Naive thymus-derived CD4-positive, alpha-beta T cell (primary cell): ENCODE measurements at regions of chr4 and their contacts with region 1.

Region 1: DNA sequence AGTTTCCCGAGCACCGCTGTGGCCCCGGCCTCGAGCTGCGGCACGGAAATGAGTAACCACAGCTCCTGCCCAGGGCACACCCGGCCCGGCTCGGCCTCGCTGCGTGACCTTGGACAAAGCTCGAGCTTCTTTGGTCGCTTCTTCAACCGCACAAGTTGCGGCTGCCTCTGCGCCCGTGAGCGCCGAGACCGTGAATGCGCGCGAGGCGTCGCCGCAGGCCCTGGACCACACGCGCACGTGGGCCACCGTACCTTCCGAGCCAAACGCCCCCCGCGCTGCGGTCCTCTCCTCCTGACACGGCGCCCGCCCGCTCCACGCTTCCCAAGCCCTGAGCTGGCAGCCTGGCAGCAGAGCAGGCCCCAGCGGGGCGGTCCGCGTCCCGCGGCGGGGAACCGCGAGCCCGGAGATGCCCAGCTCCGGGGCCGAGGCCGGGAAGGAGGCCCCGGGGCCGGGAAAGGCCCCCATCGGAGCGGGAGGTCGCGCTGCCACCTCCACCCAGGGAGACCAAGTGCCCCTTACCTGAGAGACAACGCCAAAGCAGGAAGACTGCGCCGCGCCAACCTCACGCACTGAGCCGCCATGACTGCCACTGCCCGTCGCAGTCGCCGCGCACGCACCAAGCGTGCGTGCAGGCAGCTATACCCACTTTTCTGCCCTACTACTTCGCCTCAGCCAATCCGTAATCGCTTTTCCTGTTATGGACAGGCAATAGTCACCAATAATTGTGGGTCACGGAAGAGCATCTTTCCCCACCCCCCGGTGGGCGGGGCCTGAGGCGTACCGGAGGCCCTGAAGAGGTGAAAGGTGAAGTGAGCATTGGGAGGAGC is at the start of gene GRPEL1:
- DNase-seq: peak; percentile 100
- ATAC-seq: peak; percentile 96
- H3K4me3 ChIP-seq: peak within 1 kb of the TSS; percentile 95
- H3K4me3 Mint-ChIP-seq: peak within 1 kb of the TSS; percentile 89 to 98 (median 95)
- H3K27ac ChIP-seq: peak within 1 kb of the TSS; percentile 88
- H3K27ac Mint-ChIP-seq: peak within 1 kb of the TSS; percentile 91 to 98 (median 96)
- H3K4me1 ChIP-seq: peaks cover 27% of the 10 kb centered on the region in 2 donors
- H3K4me1 Mint-ChIP-seq: peaks cover 35 to 70% (median 49%) of the 10 kb centered on the region in 7 donors
- H3K27me3 ChIP-seq: no peaks in the 10 kb centered on the region
- H3K27me3 Mint-ChIP-seq: peaks cover 0 to 13% (median 0%) of the 10 kb centered on the region in 5 donors
- total RNA-seq, gene GRPEL1: 34.5 to 53.3 (median 49.1) TPM

Region 2: DNA sequence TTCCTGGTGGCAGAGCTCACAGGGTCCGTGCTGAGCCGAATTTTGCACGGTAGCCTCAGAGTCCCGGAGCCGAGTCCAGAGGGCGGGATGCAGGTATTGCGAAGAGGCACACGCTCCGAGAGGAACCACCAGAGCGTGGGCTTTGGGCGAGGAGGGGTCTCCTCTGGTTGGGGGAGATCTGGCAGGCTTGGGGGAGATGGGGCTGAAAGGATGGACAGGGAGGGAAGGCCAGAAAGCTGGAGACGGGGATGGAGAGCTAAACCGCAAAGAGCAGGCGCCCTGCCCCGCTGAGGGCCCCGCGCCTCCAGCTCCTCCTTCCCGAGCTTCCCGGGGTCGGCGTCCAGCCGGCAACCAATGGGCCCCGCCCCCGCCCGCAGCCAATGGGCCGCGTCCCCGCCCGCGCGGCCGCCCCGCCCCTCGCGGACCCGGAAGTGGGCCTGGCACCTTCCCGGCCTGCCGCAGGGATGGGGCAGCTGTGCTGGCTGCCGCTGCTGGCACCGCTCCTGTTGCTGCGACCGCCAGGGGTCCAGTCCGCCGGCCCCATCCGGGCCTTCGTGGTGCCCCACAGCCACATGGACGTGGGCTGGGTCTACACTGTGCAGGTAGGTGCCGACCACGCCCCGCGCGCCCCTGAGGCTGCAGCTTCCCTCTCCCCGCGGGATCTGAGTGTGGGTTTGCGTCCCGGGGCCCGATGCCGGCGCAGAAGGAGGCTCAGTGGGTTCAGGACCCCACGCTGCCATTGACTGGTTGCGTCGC is 492.7 kb before region 1 on chr4 and contains the start of gene MAN2B2:
- CTCF ChIA-PET with region 1: no interaction called
- POLR2A ChIA-PET with region 1: interaction called, 3 read pairs
- intact Hi-C with region 1: loop called in 1 of 2 experiments (anchors 1 kb)
- DNase-seq: peak; percentile 68 to 92 (median 75)
- ATAC-seq: peak; percentile 96
- H3K4me3 ChIP-seq: peak within 1 kb of the TSS; percentile 92
- H3K4me3 Mint-ChIP-seq: peak within 1 kb of the TSS; percentile 84 to 94 (median 90)
- H3K27ac ChIP-seq: peak within 1 kb of the TSS; percentile 83
- H3K27ac Mint-ChIP-seq: peak within 1 kb of the TSS; percentile 68 to 91 (median 84)
- H3K4me1 ChIP-seq: peaks cover 5 to 9% of the 10 kb centered on the region in 2 donors
- H3K4me1 Mint-ChIP-seq: peaks cover 6 to 13% (median 8%) of the 10 kb centered on the region in 7 donors
- H3K27me3 ChIP-seq: no peaks in the 10 kb centered on the region
- H3K27me3 Mint-ChIP-seq: peaks cover 0 to 17% (median 0%) of the 10 kb centered on the region in 5 donors
- total RNA-seq, gene MAN2B2: 28.7 to 56.2 (median 39.4) TPM

Region 3: GRCh38 chr4:6695660-6696630 is 371.7 kb before region 1 on chr4:
- CTCF ChIA-PET with region 1: interaction called, 4 read pairs
- POLR2A ChIA-PET with region 1: interaction called, 11 read pairs
- intact Hi-C with region 1: no loop called
- DNase-seq: peak in 8 of 9 donors; percentile 53 to 82 (median 75)
- ATAC-seq: peak; percentile 89
- H3K4me3 ChIP-seq: peak overlapping the region; percentile 17
- H3K4me3 Mint-ChIP-seq: peak overlapping the region; percentile 42 to 84 (median 74)
- H3K27ac ChIP-seq: peak overlapping the region; percentile 77
- H3K27ac Mint-ChIP-seq: peak overlapping the region; percentile 93 to 99 (median 97)
- H3K4me1 ChIP-seq: peaks cover 84 to 85% of the 10 kb centered on the region in 2 donors
- H3K4me1 Mint-ChIP-seq: peaks cover 59 to 89% (median 82%) of the 10 kb centered on the region in 7 donors
- H3K27me3 ChIP-seq: no peaks in the 10 kb centered on the region
- H3K27me3 Mint-ChIP-seq: no peaks in the 10 kb centered on the region

Region 4: DNA sequence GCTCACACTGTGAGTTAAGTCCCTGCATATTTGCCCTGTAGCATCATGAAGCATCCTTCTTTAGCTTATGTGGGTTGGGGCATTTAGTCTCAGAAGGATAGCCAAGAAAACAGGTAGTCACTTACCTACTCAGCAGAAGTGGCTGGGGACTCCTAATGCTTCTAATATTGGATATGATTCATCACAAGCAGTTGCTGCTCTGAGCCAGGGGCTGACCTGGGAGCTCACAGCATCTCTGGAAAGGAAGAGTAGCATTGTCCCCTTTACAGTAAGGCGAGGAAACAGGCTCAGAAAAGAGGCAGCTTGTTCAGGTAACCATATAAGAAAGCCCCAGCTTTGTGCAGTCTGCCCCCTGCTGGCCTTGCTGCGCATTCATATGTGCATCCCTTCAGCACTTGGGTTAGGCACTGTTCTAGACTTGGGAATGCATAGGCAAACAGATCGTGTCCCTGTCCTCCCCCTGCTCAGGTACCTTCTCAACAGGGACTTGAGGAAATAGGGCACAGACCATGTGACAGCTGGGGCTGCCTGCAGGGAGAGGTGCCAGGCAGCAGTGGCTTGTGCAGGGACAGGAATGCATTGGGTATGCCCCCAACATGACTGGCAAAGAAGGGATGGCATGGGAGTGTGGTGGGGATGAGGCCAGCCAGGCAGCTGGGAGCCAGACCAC is 193.7 kb before region 1 on chr4:
- CTCF ChIA-PET with region 1: interaction called, 3 read pairs
- POLR2A ChIA-PET with region 1: interaction called, 3 read pairs
- intact Hi-C with region 1: loop called (anchors 1 to 2 kb)
- DNase-seq: peak; percentile 62 to 80 (median 73)
- ATAC-seq: peak; percentile 81
- H3K4me3 ChIP-seq: no peak overlapping the region
- H3K4me3 Mint-ChIP-seq: no peak overlapping the region
- H3K27ac ChIP-seq: no peak overlapping the region
- H3K27ac Mint-ChIP-seq: peak overlapping the region in 3 of 9 donors; percentile 53 to 59 (median 54)
- H3K4me1 ChIP-seq: no peaks in the 10 kb centered on the region
- H3K4me1 Mint-ChIP-seq: peaks cover 0 to 20% (median 6%) of the 10 kb centered on the region in 7 donors
- H3K27me3 ChIP-seq: no peaks in the 10 kb centered on the region
- H3K27me3 Mint-ChIP-seq: no peaks in the 10 kb centered on the region

Region 5: DNA sequence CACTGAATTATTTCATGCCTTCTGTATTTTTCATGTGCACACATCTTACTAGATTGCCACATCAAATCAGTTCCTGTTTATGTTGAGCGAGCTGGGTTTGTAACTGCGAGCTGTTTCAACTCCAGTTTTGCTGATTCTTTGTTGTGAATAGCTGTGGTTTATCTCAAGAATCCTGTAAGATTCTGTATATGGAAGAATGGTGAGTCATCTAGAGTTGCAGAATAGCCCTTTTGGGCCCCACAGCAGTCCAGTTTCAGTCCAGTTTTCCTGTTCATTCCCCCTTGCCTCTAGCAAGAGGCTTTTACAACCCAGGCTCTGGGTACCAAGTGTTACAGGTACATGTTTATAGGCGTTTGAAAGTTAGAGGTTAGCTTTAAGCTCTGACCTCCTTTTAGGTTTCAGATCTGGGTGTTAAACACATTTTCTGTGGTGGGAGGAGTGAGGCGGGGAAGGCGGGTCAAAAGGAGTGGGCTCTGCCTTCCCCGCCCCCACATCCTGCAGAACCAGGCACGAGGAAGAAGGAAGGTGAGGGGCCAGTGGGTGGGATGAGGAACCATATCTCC is 125.3 kb before region 1 on chr4:
- CTCF ChIA-PET with region 1: interaction called, 3 read pairs
- POLR2A ChIA-PET with region 1: interaction called, 7 read pairs
- intact Hi-C with region 1: loop called in 1 of 2 experiments (anchors 1 kb)
- DNase-seq: peak in 8 of 9 donors; percentile 47 to 76 (median 64)
- ATAC-seq: peak; percentile 87
- H3K4me3 ChIP-seq: peak overlapping the region; percentile 46
- H3K4me3 Mint-ChIP-seq: peak overlapping the region; percentile 73 to 91 (median 83)
- H3K27ac ChIP-seq: peak overlapping the region; percentile 57
- H3K27ac Mint-ChIP-seq: peak overlapping the region; percentile 76 to 94 (median 90)
- H3K4me1 ChIP-seq: peaks cover 46 to 51% of the 10 kb centered on the region in 2 donors
- H3K4me1 Mint-ChIP-seq: peaks cover 48 to 85% (median 74%) of the 10 kb centered on the region in 7 donors
- H3K27me3 ChIP-seq: no peaks in the 10 kb centered on the region
- H3K27me3 Mint-ChIP-seq: no peaks in the 10 kb centered on the region

Region 6: GRCh38 chr4:7037425-7037824 is 30.2 kb before region 1 on chr4:
- CTCF ChIA-PET with region 1: interaction called, 73 read pairs
- POLR2A ChIA-PET with region 1: interaction called, 173 read pairs
- intact Hi-C with region 1: loop called in 1 of 2 experiments (anchors 1 kb)
- DNase-seq: peak in 3 of 9 donors; percentile 12 to 40 (median 23)
- ATAC-seq: peak; percentile 57
- H3K4me3 ChIP-seq: no peak overlapping the region
- H3K4me3 Mint-ChIP-seq: no peak overlapping the region
- H3K27ac ChIP-seq: no peak overlapping the region
- H3K27ac Mint-ChIP-seq: peak overlapping the region in 5 of 9 donors; percentile 1 to 43 (median 9)
- H3K4me1 ChIP-seq: no peaks in the 10 kb centered on the region
- H3K4me1 Mint-ChIP-seq: peaks cover 7 to 28% (median 20%) of the 10 kb centered on the region in 7 donors
- H3K27me3 ChIP-seq: no peaks in the 10 kb centered on the region
- H3K27me3 Mint-ChIP-seq: peaks cover 0 to 13% (median 0%) of the 10 kb centered on the region in 5 donors

Region 7: DNA sequence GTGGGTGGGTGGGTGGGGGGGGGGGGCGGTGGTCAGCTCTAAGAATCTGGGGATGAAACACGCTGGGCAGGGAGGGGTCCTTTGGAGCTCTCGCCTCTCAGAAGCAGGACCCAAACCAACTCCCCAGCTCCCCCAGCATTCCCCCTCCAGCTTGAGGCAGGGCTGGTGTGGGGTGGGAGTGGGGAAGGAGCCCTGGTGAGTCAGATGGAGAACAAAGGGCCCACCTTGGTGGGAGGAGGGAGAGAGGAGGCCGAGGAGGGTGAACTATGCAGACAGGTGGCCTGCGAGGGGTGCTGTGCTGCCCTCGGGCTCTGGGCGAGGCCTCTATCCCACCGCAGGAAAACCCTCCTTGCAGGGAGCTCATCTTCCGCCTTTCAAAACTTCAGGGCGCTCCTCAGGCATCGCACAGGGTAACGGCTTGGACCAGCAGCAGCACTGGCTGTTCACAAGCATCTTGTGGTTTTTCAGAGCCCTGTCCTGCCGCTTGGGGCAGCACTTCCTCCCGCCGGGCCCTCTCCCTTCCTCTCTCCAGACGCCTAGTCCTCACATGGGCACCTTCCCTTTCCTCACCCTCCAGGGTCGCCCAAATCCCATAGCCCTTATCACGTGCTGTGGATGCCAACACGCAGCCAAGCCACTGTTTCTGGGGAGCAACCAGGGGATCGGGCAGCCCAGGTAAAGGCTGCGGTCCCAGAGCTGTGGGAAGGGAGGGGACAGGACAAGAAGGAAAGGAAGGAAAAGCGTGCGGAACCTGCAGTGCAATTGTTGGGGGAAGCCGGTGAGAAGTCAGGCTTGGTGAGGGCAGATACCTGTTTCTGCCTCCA is 34.2 kb after region 1 on chr4:
- CTCF ChIA-PET with region 1: interaction called, 4 read pairs
- POLR2A ChIA-PET with region 1: interaction called, 5 read pairs
- intact Hi-C with region 1: loop called (anchors 1 kb)
- DNase-seq: peak; percentile 15 to 59 (median 30)
- ATAC-seq: peak; percentile 67
- H3K4me3 ChIP-seq: peak overlapping the region; percentile 78
- H3K4me3 Mint-ChIP-seq: peak overlapping the region; percentile 89 to 95 (median 92)
- H3K27ac ChIP-seq: no peak overlapping the region
- H3K27ac Mint-ChIP-seq: peak overlapping the region in 6 of 9 donors; percentile 59 to 83 (median 72)
- H3K4me1 ChIP-seq: peaks cover 12 to 15% of the 10 kb centered on the region in 2 donors
- H3K4me1 Mint-ChIP-seq: peaks cover 9 to 30% (median 17%) of the 10 kb centered on the region in 7 donors
- H3K27me3 ChIP-seq: no peaks in the 10 kb centered on the region
- H3K27me3 Mint-ChIP-seq: peaks cover 0 to 36% (median 0%) of the 10 kb centered on the region in 5 donors